ENCODE measurements at regions of chr2 and their contacts with region 1.

Region 1: DNA sequence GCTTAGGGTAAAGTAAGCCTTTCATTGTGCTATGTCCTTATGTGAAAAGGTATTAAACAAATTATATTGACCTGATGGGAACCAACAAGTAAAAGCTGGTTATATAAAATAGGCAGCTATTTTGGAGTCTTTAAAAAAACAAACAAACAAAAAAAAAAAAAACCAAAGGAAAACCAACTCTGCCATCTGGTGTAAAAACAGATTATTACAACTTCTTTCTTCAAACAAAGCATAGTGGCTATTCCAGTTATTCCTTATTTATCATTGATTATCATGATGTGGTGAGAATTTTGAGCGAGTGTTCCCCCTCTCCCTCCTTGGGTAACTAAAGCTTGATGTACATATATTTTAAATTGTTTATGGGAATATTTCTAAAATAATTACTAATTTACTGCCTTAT is 122.4 kb upstream of the FHL2 start:
- DNase-seq: no peak
- H3K4me3 ChIP-seq: no peak overlapping the region
- CTCF ChIP-seq: peak in 1 of 3 donors; percentile 47
- POLR2A ChIP-seq: no peak

Region 2: DNA sequence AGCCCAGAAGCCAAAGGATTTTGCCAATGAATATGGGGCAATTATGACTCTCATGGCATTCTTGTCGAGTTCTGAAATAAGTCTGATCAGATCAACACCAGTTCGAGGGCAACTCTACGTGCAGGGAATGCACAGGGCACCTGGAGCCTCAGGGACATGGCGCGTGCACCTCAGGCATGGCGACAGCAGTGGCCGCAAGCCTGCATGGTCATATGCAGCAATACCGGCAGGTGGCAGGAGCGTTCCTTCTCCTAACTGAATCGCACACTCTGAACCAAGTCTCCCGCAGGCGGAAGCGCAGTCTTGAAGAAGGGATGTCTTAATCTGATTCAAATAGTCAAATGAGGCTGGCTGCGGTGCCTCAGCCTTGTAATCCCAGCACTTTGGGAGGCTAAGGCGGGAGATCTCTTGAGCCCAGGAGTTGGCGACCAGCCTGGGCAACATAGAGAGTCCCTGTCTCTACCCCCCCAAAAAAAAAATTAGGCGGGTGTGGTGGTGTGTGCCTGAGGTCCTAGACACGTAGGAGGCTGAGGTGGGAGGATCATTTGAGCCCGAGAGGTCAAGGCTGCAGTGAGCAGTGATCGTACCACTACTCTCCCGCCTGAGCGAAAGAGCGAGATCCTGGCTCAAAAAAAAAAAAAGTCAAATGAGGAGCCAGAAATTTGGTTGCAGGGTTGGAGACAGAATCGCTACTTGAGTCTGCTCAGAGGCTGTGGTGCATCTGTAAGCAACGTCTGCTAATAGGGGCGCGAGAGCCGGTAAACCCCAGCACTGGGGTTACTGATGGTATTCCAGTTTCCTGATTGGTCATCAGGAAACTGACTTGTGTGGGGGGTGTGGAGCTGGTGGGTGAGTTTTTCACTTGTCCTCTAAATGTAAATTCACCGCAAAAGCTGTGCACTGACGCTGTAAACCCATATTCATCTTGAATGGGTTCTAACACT is 151.2 kb before region 1 on chr2:
- intact Hi-C with region 1: loop called (anchors 5 kb)
- DNase-seq: peak; percentile 86 to 95
- H3K4me3 ChIP-seq: no peak overlapping the region
- CTCF ChIP-seq: peak in 1 of 3 donors; percentile 91
- POLR2A ChIP-seq: no peak